ENCODE measurements at regions of chr12 and their contacts with region 1.

Region 1: GRCh38 chr12:122888232-122888867 is 7.6 kb downstream of the VPS37B start:
- DNase-seq: peak; percentile 82
- ATAC-seq: peak; percentile 47
- H3K4me3 ChIP-seq: peak overlapping the region; percentile 24 to 67 (median 49)
- H3K4me3 Mint-ChIP-seq: peak overlapping the region; percentile 97
- H3K27ac ChIP-seq: peak overlapping the region; percentile 87 to 97
- H3K27ac Mint-ChIP-seq: peak overlapping the region; percentile 96
- H3K4me1 ChIP-seq: peaks cover 88 to 95% of the 10 kb centered on the region in 2 donors
- H3K4me1 Mint-ChIP-seq: peaks cover 84% of the 10 kb centered on the region
- H3K27me3 ChIP-seq: no peaks in the 10 kb centered on the region
- H3K27me3 Mint-ChIP-seq: no peaks in the 10 kb centered on the region
- CTCF ChIP-seq: no peak

Region 2: GRCh38 chr12:122813310-122813713 is 75.0 kb before region 1 on chr12:
- CTCF ChIA-PET with region 1: no interaction called
- POLR2A ChIA-PET with region 1: interaction called, 4 read pairs
- intact Hi-C with region 1: loop called (anchors 5 kb)
- DNase-seq: peak; percentile 90
- ATAC-seq: peak; percentile 98
- H3K4me3 ChIP-seq: peak overlapping the region in 4 of 5 experiments; percentile 28 to 62 (median 38)
- H3K4me3 Mint-ChIP-seq: peak overlapping the region; percentile 90
- H3K27ac ChIP-seq: peak overlapping the region; percentile 74 to 85
- H3K27ac Mint-ChIP-seq: peak overlapping the region; percentile 96
- H3K4me1 ChIP-seq: peaks cover 29 to 38% of the 10 kb centered on the region in 2 donors
- H3K4me1 Mint-ChIP-seq: peaks cover 45% of the 10 kb centered on the region
- H3K27me3 ChIP-seq: no peaks in the 10 kb centered on the region
- H3K27me3 Mint-ChIP-seq: no peaks in the 10 kb centered on the region
- CTCF ChIP-seq: peak; percentile 42

Region 3: DNA sequence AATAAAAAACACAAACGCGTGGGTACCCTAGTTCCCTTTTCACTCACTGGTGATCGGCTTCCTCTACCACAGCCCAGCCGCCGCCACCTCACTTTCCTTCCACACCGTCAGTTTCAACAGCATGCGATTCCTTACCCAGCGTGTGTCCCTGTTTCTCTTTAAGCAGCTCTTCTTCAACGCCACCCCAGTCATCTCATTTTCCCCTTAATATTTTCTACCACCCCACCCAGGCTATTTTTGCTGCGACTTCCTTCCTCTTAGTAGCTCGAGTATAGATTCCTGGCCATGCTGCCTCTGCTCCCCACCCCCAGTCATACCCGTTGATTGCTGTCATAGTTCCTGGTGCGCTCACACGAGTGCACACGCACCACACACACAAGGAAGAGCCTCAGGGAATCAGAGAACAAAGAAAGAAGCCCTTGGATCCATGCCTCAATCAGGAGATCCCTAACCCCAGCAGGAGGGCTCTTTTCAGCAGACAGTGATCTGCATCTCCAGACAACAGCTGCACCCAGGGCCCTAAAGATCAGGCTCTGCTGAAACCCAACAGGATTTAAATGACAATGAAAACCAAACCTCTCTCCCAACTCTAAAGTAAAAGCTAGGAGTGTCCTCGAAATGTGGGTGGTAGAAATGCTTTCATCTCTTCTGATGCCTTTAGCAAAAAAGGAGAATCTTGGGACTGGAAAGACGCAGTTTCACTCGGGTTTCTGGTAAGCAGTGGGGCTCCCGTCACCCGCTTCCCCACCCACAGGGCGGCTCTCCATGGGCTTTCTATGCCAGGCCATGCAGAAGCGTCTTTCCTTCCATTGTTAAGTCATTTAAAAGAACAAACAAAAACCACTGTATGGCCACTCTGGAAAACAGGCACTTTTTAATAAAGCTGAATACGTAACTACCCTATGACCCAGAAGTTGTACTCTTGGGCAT is 16.2 kb before region 1 on chr12:
- CTCF ChIA-PET with region 1: interaction called, 44 read pairs
- POLR2A ChIA-PET with region 1: interaction called, 7 read pairs
- intact Hi-C with region 1: loop called (anchors 1 kb)
- DNase-seq: peak; percentile 86
- ATAC-seq: peak; percentile 69
- H3K4me3 ChIP-seq: peak overlapping the region; percentile 52 to 89 (median 69)
- H3K4me3 Mint-ChIP-seq: peak overlapping the region; percentile 86
- H3K27ac ChIP-seq: peak overlapping the region; percentile 69 to 80
- H3K27ac Mint-ChIP-seq: peak overlapping the region; percentile 95
- H3K4me1 ChIP-seq: peaks cover 93 to 95% of the 10 kb centered on the region in 2 donors
- H3K4me1 Mint-ChIP-seq: peaks cover 93% of the 10 kb centered on the region
- H3K27me3 ChIP-seq: no peaks in the 10 kb centered on the region
- H3K27me3 Mint-ChIP-seq: no peaks in the 10 kb centered on the region
- CTCF ChIP-seq: no peak

Region 4: DNA sequence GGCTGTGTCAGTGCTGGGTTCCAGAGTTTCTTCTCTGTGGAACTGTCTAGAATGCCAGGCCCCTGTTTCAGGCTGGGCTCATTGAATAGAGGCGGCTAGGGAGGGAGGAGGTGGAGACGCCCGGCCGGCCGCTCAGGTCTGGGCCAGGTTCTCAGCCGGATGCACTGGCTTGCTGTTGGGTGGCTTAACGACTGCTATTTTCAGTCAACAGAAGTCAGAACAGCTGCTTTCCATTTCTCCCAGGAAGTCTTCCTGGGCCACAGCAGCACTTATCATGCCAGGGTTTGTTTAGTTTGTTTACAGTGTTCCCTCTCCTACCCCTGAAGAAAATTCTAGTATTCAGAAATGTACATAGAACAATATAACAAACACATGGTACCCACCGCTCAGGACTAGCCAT is 33.6 kb after region 1 on chr12:
- CTCF ChIA-PET with region 1: no interaction called
- POLR2A ChIA-PET with region 1: no interaction called
- intact Hi-C with region 1: loop called (anchors 5 kb)
- DNase-seq: no peak
- ATAC-seq: no peak
- H3K4me3 ChIP-seq: no peak overlapping the region
- H3K4me3 Mint-ChIP-seq: no peak overlapping the region
- H3K27ac ChIP-seq: no peak overlapping the region
- H3K27ac Mint-ChIP-seq: no peak overlapping the region
- H3K4me1 ChIP-seq: peaks cover 13 to 27% of the 10 kb centered on the region in 2 donors
- H3K4me1 Mint-ChIP-seq: peaks cover 22% of the 10 kb centered on the region
- H3K27me3 ChIP-seq: no peaks in the 10 kb centered on the region
- H3K27me3 Mint-ChIP-seq: no peaks in the 10 kb centered on the region
- CTCF ChIP-seq: no peak

Region 5: DNA sequence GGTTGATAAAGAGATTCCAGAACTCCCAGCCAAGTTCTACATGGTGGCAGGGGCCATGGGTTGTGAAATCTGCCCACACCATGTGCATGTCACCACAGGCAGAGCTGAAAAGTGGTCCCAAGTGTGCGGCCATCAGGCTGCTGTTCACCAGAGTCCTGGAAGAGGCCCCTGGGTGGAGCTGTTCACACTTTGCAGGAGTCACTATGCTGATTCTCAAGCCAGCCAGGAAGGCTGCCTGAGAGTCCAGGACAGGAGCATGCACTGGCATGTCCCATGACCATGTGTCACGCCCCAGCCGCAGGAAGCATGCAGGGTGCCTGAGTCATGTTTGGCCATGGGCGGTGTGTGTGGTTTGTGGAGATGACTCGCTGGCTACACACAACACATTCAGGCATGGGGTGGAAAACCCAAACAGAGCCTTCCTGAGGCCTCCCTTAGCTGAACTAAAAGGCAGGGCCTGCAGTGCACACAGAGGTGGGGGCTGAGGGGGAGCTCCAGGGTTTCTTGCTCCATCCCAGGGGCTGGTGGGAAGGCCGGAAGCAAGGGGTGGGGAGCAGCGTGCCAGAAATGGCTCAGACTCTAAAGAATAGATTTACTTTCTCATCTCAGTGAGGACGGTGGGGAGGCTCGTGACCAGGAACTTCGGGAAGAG is 58.5 kb after region 1 on chr12:
- CTCF ChIA-PET with region 1: interaction called, 86 read pairs
- POLR2A ChIA-PET with region 1: interaction called, 4 read pairs
- intact Hi-C with region 1: no loop called
- DNase-seq: peak; percentile 46
- ATAC-seq: peak; percentile 67
- H3K4me3 ChIP-seq: no peak overlapping the region
- H3K4me3 Mint-ChIP-seq: peak overlapping the region; percentile 54
- H3K27ac ChIP-seq: no peak overlapping the region
- H3K27ac Mint-ChIP-seq: peak overlapping the region; percentile 47
- H3K4me1 ChIP-seq: peaks cover 25 to 33% of the 10 kb centered on the region in 2 donors
- H3K4me1 Mint-ChIP-seq: peaks cover 42% of the 10 kb centered on the region
- H3K27me3 ChIP-seq: no peaks in the 10 kb centered on the region
- H3K27me3 Mint-ChIP-seq: no peaks in the 10 kb centered on the region
- CTCF ChIP-seq: no peak

Region 6: GRCh38 chr12:123912415-123913380 is 1024.3 kb after region 1 on chr12:
- CTCF ChIA-PET with region 1: no interaction called
- POLR2A ChIA-PET with region 1: no interaction called
- intact Hi-C with region 1: no loop called
- DNase-seq: no peak
- ATAC-seq: no peak
- H3K4me3 ChIP-seq: no peak overlapping the region
- H3K4me3 Mint-ChIP-seq: no peak overlapping the region
- H3K27ac ChIP-seq: no peak overlapping the region
- H3K27ac Mint-ChIP-seq: no peak overlapping the region
- H3K4me1 ChIP-seq: no peaks in the 10 kb centered on the region
- H3K4me1 Mint-ChIP-seq: no peaks in the 10 kb centered on the region
- H3K27me3 ChIP-seq: no peaks in the 10 kb centered on the region
- H3K27me3 Mint-ChIP-seq: peaks cover 9% of the 10 kb centered on the region
- CTCF ChIP-seq: no peak